Activated CD4-positive, alpha-beta memory T cell treated with anti-CD3 and anti-CD28 coated beads for 36 hours (primary cell): ENCODE measurements at regions of chr1 and their contacts with region 1.

Region 1: GRCh38 chr1:159089184-159089791 is 12.7 kb upstream of the AIM2 start:
- DNase-seq: no peak
- H3K4me3 Mint-ChIP-seq: peak overlapping the region; percentile 43
- H3K27ac Mint-ChIP-seq: peak overlapping the region; percentile 92
- H3K4me1 Mint-ChIP-seq: peaks cover 53% of the 10 kb centered on the region
- H3K27me3 Mint-ChIP-seq: no peaks in the 10 kb centered on the region

Region 2: DNA sequence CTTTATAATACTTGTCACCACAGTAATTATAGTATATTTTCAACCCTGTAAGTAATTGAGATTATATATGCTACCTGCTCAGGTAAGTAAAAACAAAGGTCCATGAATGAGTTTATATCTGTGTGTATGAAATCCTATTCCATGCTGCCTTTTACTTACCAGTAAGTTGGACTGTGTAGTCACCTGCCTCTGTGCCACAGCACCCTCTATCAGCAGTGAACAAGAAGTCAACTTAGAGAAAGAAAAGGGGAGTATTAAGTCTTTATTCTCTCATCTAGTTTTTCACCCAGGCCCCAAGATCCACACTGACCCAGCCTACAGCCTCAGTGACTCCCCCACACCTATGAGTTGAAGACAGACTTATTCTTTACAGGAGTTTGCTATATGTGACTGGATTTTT is 116.4 kb before region 1 on chr1:
- CTCF ChIA-PET with region 1: no interaction called
- POLR2A ChIA-PET with region 1: no interaction called
- intact Hi-C with region 1: loop called (anchors 1 kb)
- DNase-seq: peak; percentile 37
- H3K4me3 Mint-ChIP-seq: no peak overlapping the region
- H3K27ac Mint-ChIP-seq: no peak overlapping the region
- H3K4me1 Mint-ChIP-seq: peaks cover 43% of the 10 kb centered on the region
- H3K27me3 Mint-ChIP-seq: no peaks in the 10 kb centered on the region

Region 3: DNA sequence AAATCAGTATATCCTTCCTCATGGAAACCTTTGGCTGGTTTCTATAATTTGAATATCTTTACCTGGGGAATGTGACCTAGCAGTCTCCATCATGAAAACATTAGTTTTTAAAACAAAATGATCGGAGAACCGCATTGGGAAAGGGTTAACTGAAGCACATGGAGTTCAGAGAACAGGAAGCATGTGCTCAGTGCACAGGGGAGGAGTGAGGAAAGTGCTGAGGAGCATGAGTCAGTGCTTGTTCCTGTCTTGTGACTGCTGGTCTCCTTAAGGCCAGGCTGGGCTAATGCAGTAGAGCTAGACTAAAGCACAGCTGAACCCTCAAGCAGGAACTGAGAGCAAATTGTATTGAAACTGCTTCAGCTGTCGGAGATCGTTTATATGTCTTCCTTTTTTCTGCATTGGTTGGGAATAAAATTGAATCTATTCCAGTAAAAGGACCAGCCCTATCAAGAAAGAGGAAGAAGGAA is 73.8 kb before region 1 on chr1:
- CTCF ChIA-PET with region 1: interaction called, 8 read pairs
- POLR2A ChIA-PET with region 1: interaction called, 27 read pairs
- intact Hi-C with region 1: no loop called
- DNase-seq: peak; percentile 85
- H3K4me3 Mint-ChIP-seq: peak overlapping the region; percentile 96
- H3K27ac Mint-ChIP-seq: peak overlapping the region; percentile 100
- H3K4me1 Mint-ChIP-seq: peaks cover 56% of the 10 kb centered on the region
- H3K27me3 Mint-ChIP-seq: no peaks in the 10 kb centered on the region

Region 4: GRCh38 chr1:159077120-159077961 is 11.9 kb before region 1 on chr1:
- CTCF ChIA-PET with region 1: interaction called, 119 read pairs
- POLR2A ChIA-PET with region 1: interaction called, 183 read pairs
- intact Hi-C with region 1: loop called (anchors 1 kb)
- DNase-seq: peak; percentile 100
- H3K4me3 Mint-ChIP-seq: peak overlapping the region; percentile 95
- H3K27ac Mint-ChIP-seq: peak overlapping the region; percentile 97
- H3K4me1 Mint-ChIP-seq: peaks cover 52% of the 10 kb centered on the region
- H3K27me3 Mint-ChIP-seq: no peaks in the 10 kb centered on the region

Region 5: GRCh38 chr1:159829273-159829634 is 740.0 kb after region 1 on chr1:
- CTCF ChIA-PET with region 1: no interaction called
- POLR2A ChIA-PET with region 1: no interaction called
- intact Hi-C with region 1: no loop called
- DNase-seq: no peak
- H3K4me3 Mint-ChIP-seq: no peak overlapping the region
- H3K27ac Mint-ChIP-seq: no peak overlapping the region
- H3K4me1 Mint-ChIP-seq: peaks cover 42% of the 10 kb centered on the region
- H3K27me3 Mint-ChIP-seq: no peaks in the 10 kb centered on the region

Region 6: DNA sequence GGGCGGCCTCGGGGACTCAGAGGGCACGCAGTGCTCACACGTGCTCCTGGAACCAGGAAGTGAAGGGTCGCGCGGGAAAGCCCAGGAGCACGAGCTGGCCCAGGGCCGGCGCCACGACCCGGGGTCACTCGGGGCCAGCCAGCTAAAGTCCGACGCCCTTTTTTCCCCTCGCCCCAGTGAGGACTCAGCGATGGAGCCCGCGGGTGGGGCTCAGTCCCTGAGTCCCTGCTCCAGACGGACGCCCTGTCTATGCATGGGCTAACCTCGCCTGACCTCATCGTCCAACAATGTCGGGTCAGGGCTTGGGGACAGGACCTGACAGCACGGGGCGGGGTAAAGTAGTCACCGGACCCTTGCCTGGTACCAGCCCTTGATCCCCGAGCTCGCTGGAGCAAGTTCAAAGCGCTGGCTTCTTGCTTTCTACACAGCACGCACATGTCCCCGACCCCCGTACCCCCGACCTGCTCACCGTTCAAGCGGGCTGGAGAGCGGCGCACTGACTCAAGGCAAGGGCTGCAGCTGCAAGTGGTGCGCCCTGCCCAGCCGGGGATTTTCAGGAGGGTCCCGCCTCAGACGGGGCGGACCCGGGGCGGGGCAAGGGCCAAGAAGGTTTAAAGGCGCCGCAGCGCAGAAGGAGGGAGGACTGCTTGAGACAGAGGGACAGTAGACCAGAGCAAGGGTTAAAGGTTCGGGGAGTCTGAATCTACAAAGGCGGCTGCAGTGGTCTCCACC is 835.9 kb after region 1 on chr1 and contains the start of gene TAGLN2:
- CTCF ChIA-PET with region 1: no interaction called
- POLR2A ChIA-PET with region 1: interaction called, 3 read pairs
- intact Hi-C with region 1: loop called (anchors 2 kb)
- DNase-seq: peak; percentile 93
- H3K4me3 Mint-ChIP-seq: peak within 1 kb of the TSS; percentile 93
- H3K27ac Mint-ChIP-seq: peak within 1 kb of the TSS; percentile 98
- H3K4me1 Mint-ChIP-seq: peaks cover 38% of the 10 kb centered on the region
- H3K27me3 Mint-ChIP-seq: no peaks in the 10 kb centered on the region
- total RNA-seq, gene TAGLN2: 597 to 607 TPM

Region 7: GRCh38 chr1:160354388-160354985 is 1265.2 kb after region 1 on chr1:
- CTCF ChIA-PET with region 1: no interaction called
- POLR2A ChIA-PET with region 1: no interaction called
- intact Hi-C with region 1: no loop called
- DNase-seq: no peak
- H3K4me3 Mint-ChIP-seq: no peak overlapping the region
- H3K27ac Mint-ChIP-seq: no peak overlapping the region
- H3K4me1 Mint-ChIP-seq: no peaks in the 10 kb centered on the region
- H3K27me3 Mint-ChIP-seq: no peaks in the 10 kb centered on the region